Psoas muscle (tissue), 8 donors: ENCODE measurements at regions of chr21 and their contacts with region 1.

Region 1: DNA sequence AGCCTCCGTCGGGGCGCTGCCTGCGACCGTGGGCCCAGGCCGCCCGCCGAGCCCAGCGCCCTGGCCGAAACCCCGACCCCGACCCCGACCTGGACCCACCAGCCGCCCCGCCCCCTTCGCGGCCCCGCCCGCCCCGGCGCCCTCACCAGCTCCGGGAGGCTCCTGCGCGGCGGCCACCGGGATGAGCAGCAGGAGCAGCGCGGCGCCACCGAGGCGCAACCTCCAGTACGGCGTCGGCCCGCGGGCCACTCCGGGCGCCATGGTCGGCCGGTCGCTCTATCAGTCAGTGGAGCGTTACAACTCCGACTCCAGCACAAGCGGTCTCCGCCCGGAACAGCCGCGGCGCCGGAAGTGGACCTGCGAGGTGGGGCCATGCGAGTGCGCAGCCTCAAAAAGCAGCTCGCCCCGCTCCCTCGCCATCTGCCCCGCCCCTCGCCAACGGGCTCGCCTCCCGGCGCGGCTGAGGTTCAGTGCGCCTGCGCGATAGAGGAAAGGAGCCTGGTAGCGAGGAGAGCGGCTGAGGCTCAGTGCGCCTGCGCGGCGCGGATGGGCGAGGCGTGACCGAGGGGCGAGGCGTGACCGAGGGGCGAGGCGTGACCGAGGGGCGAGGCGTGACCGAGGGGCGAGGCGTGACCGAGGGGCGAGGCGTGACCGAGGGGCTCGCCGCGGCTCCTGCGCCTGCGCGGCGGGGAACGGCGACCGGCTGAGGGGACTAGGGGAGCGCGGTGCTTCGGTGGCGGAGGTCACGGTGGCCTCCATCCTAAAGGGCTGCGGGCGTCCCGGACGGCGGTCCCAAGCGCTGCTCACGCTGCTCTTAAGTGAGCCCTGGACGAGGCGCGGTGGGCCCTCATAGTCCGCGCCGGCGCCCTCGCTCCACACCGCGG is at the start of gene PTTG1IP:
- DNase-seq: peak; percentile 99 to 100
- ATAC-seq: peak; percentile 76 to 82 (median 80)
- H3K4me3 ChIP-seq: peak within 1 kb of the TSS; percentile 90
- H3K27ac ChIP-seq: peak within 1 kb of the TSS; percentile 97
- H3K4me1 ChIP-seq: peaks cover 49% of the 10 kb centered on the region
- H3K27me3 ChIP-seq: no peaks in the 10 kb centered on the region
- CTCF ChIP-seq: no peak
- total RNA-seq, gene PTTG1IP: 49.6 to 72.1 (median 66.5) TPM

Region 2: GRCh38 chr21:44817506-44817880 is 56.1 kb before region 1 on chr21:
- intact Hi-C with region 1: loop called (anchors 1 to 5 kb)
- DNase-seq: peak; percentile 91 to 97
- ATAC-seq: peak; percentile 92 to 96 (median 94)
- H3K4me3 ChIP-seq: peak overlapping the region; percentile 92
- H3K27ac ChIP-seq: peak overlapping the region; percentile 92
- H3K4me1 ChIP-seq: peaks cover 13% of the 10 kb centered on the region
- H3K27me3 ChIP-seq: no peaks in the 10 kb centered on the region
- CTCF ChIP-seq: no peak

Region 3: DNA sequence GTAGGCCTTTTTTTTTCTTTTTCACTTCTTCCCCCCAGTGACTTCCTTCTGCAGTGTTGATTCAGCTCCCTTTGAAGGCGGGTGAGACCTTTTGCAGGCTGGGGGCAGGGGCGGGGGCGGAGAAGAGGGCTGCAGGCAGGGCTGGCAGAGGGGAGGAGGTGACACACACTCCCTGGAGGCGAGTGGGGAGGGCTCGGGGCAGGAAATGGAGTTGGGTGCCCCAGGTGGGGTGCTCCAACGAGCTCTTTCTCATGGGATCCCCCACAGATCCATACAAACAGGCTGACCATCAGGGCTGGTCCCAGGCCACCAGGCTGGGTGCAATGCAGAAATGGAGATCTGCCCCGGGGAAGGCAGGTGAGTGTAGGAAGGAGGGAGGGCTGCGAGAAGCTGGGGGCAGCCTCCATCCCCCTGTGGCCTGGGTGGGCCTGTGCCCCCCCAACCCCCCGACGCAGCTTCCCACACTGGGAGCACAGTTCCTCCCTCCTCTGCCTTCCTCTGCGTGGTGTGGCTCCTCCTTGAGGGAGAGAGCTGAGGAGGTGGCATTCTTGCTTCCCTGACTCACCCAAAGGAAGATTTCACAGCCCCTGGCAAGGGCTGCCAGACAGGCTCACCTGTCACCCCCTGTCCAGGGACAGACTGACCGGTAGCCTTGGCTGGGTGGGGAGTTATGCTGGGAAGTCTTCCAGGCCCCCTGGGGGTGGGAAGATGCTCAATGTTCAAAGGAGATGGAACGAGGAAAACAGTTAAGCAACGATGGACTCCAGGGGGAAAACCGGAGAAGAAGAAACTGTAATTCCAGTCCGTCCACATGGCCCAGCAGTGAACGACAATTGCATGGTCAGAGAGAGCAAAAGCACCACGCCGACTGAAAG is 54.2 kb after region 1 on chr21:
- intact Hi-C with region 1: no loop called
- DNase-seq: peak; percentile 44 to 61
- ATAC-seq: peak in 3 of 4 donors; percentile 7 to 35 (median 24)
- H3K4me3 ChIP-seq: peak overlapping the region; percentile 1
- H3K27ac ChIP-seq: no peak overlapping the region
- H3K4me1 ChIP-seq: peaks cover 13% of the 10 kb centered on the region
- H3K27me3 ChIP-seq: peaks cover 0 to 64% (median 20%) of the 10 kb centered on the region in 3 donors
- CTCF ChIP-seq: no peak